ENCODE measurements at regions of chr1 and their contacts with region 1.

Region 1: DNA sequence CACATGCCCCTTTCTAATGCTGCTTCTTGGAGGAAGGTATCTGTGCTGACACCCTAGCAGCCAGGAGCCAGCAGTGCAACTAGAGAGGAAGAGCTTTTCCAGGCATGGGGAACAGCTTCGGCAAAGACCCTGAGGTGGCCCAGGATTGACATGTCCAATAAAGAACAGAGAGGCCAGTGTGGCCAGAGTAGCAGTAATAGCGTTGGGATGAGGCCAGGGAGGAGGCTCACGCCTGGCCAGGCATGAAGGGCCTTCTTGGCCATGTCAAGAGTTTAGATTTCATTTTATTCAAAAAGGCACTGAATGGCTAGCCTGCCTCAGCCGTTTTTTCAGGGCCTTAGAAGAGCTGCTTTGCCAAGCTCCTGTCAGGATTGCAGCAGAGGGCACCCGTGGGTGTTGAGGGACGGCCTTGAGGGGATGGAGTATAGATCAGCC is 16.3 kb upstream of the ADAMTSL4 start:
- DNase-seq: peak; percentile 53 to 68
- ATAC-seq: no peak
- H3K4me3 ChIP-seq: no peak overlapping the region
- H3K27ac ChIP-seq: peak overlapping the region; percentile 82 to 88
- H3K4me1 ChIP-seq: peaks cover 0 to 4% of the 10 kb centered on the region in 2 donors
- H3K27me3 ChIP-seq: no peaks in the 10 kb centered on the region

Region 2: GRCh38 chr1:150213170-150214098 is 319.5 kb before region 1 on chr1:
- intact Hi-C with region 1: no loop called
- DNase-seq: peak; percentile 98 to 99
- ATAC-seq: peak; percentile 99
- H3K4me3 ChIP-seq: peak overlapping the region; percentile 44 to 59
- H3K27ac ChIP-seq: no peak overlapping the region
- H3K4me1 ChIP-seq: no peaks in the 10 kb centered on the region
- H3K27me3 ChIP-seq: no peaks in the 10 kb centered on the region

Region 3: GRCh38 chr1:150363426-150364230 is 169.3 kb before region 1 on chr1 and contains the start of gene RPRD2:
- intact Hi-C with region 1: loop called in 1 of 2 experiments (anchors 5 kb)
- DNase-seq: peak; percentile 99 to 100
- ATAC-seq: peak; percentile 99
- H3K4me3 ChIP-seq: peak within 1 kb of the TSS; percentile 99 to 100
- H3K27ac ChIP-seq: peak within 1 kb of the TSS; percentile 43 to 81
- H3K4me1 ChIP-seq: no peaks in the 10 kb centered on the region
- H3K27me3 ChIP-seq: no peaks in the 10 kb centered on the region
- total RNA-seq, gene RPRD2: 27.2 to 30.9 TPM

Region 4: DNA sequence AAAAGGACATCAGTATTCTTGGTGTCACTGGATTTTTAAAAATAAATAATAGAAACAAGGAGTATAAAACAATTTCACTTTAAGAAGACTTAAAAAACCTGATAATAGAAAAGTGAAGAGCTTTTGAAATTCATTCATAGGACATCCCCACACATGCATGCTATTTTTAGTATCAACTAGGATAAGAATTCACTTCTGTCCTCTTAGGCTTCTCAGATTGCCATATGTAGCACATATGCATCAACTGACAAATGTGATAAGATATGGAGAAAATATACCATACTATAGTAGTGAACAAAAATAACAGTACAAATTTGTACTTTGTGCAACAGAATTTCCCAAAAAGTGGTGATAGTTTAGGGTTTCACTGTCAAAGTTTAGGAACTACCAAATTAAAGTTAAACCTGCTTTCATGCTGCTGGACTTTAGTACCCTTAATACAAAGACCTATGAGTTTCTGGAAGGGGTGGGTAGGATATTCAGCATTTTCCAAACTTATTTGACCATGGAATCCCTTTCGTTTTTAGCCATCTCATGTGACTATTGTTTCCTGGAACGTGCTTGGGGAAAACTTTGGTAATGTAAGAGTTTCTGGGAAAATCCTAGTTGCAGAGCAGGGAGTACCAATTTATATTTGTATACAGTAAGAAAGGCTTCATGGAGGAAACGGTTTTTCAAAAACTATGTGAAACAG is 149.1 kb before region 1 on chr1:
- intact Hi-C with region 1: no loop called
- DNase-seq: no peak
- ATAC-seq: no peak
- H3K4me3 ChIP-seq: no peak overlapping the region
- H3K27ac ChIP-seq: no peak overlapping the region
- H3K4me1 ChIP-seq: peaks cover 0 to 2% of the 10 kb centered on the region in 2 donors
- H3K27me3 ChIP-seq: no peaks in the 10 kb centered on the region

Region 5: GRCh38 chr1:150473659-150474058 is 59.2 kb before region 1 on chr1:
- intact Hi-C with region 1: loop called in 1 of 2 experiments (anchors 5 kb)
- DNase-seq: no peak
- ATAC-seq: peak; percentile 34
- H3K4me3 ChIP-seq: no peak overlapping the region
- H3K27ac ChIP-seq: no peak overlapping the region
- H3K4me1 ChIP-seq: no peaks in the 10 kb centered on the region
- H3K27me3 ChIP-seq: no peaks in the 10 kb centered on the region

Region 6: DNA sequence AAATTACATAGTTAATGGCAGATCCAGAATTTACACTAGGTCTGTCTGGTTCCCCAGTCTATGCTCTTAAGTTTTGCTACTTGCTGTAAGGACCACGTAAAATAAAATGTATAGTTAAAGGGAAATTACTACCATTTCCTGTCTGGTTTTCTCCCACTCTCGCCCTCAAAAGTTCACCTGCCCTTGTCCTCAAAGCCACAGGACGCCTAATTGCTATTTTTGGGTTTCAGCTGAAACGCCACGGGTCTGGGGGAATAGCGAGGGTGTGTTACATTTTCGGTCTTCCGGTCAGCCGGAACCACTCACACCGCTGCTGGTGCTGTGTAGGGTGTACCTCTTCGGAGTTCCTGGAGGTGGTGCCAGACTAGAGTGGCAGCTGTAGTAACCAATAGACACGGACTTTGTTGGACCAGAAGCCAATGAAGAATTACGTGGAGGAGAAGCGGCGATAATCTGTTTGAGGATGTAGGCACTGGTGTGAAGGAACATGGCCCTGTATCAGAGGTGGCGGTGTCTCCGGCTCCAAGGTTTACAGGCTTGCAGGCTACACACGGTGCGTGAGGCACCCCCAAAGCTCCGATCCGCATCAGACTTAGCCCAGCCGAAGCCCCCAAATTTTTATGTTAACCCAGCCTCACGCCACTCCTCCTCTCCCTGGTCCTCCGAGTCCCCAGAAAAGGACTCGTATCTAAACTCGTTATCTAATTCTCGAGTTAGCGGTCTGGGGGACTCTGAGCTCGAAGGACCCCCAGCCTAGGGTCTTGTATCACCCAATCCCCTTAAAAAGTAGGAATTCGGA is 45.7 kb before region 1 on chr1 and contains the start of gene TARS2:
- intact Hi-C with region 1: loop called in 1 of 2 experiments (anchors 5 kb)
- DNase-seq: peak; percentile 93 to 95
- ATAC-seq: peak; percentile 100
- H3K4me3 ChIP-seq: peak within 1 kb of the TSS; percentile 63 to 68
- H3K27ac ChIP-seq: no peak within 1 kb of the TSS
- H3K4me1 ChIP-seq: no peaks in the 10 kb centered on the region
- H3K27me3 ChIP-seq: no peaks in the 10 kb centered on the region
- total RNA-seq, gene TARS2: 10.6 to 16.9 TPM

Measured in aorta (tissue), 5 donors.